ENCODE measurements at regions of chr15 and their contacts with region 1.

Region 1: GRCh38 chr15:98827217-98827616 is 178.9 kb downstream of the IGF1R start:
- DNase-seq: no peak
- H3K4me3 ChIP-seq: no peak overlapping the region
- H3K27ac ChIP-seq: no peak overlapping the region
- H3K4me1 ChIP-seq: no peaks in the 10 kb centered on the region
- H3K27me3 ChIP-seq: no peaks in the 10 kb centered on the region
- CTCF ChIP-seq: no peak
- POLR2A ChIP-seq: no peak

Region 2: GRCh38 chr15:98800437-98801233 is 26.6 kb before region 1 on chr15:
- intact Hi-C with region 1: no loop called
- DNase-seq: no peak
- H3K4me3 ChIP-seq: peak overlapping the region in 1 of 3 donors; percentile 24
- H3K27ac ChIP-seq: peak overlapping the region; percentile 48 to 63
- H3K4me1 ChIP-seq: peaks cover 0 to 38% of the 10 kb centered on the region in 2 donors
- H3K27me3 ChIP-seq: no peaks in the 10 kb centered on the region
- CTCF ChIP-seq: no peak
- POLR2A ChIP-seq: no peak

Region 3: DNA sequence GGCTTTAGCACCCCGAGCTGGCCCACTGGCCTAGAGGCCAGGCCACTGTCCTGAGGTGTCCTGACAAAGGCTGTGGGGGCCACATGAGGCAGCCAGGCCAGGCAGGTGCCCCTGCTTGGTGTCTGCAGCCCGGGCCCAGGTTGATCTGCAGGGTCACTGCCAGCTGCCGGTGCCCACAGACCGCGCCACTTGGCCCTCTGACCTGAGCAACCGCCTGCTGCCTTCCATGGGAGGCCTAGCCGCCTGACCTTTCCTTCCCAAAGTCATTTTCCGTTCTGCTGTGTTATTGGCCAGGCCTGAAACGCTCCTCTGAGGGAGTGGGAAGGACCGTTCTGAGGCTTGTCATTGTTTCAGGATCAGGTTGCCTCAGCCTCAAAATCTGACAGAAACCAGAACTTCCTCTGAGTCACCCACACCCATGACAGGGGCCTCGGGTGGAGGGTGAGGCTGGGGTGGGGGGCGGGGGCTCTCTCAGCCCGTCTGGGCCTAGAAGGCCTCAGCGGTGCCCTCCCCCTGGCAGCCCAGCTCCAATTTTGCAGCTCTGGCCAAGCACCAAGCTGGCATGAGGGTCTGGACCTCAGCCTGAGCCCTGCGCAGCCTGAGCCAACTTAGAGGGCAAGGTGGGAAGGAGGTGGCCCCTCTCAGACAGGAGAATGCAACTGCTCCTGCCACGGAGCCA is 597.9 kb after region 1 on chr15:
- intact Hi-C with region 1: loop called (anchors 5 kb)
- DNase-seq: no peak
- H3K4me3 ChIP-seq: no peak overlapping the region
- H3K27ac ChIP-seq: peak overlapping the region; percentile 66 to 75
- H3K4me1 ChIP-seq: no peaks in the 10 kb centered on the region
- H3K27me3 ChIP-seq: no peaks in the 10 kb centered on the region
- CTCF ChIP-seq: no peak
- POLR2A ChIP-seq: no peak